Transverse colon (tissue), 4 donors: ENCODE measurements at regions of chr17 and their contacts with region 1.

Region 1: DNA sequence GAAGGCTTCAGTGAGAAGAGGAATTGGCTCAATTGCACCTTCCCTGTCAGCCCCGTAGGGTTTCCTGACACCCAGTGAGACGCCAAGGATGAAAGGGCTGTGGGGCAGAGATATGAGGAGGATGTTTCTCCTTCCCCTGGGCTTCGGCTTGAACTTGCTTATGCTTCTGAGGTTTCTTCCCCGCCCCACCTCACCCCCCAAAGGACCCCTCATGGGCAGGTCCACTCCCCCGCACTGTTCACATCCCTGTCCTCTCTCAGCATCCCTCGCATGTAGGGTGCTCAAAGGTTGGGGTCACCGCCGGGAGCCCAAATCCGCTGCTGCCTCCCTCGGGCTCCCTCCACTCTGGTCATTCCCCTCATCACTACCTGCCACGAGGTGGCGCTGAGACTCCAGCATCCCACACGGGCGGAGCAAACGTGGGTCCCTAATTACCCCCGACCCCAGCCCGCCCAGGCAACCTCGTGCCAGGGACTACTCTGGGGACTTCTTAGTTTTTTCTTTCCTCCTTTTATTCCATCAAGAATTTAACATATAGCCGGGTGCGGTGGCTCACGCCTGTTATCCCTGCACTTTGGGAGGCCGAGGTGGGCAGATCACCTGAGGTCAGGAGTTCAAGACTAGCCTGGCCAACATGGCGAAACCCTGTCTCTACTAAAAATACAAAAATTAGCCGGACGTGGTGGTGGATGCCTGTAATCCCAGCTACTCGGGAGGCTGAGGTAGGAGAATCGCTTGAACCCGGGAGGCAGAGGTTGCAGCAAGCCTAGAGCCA is 3.3 kb upstream of the TRARG1 start:
- DNase-seq: peak; percentile 71
- H3K4me3 ChIP-seq: no peak overlapping the region
- H3K27ac ChIP-seq: no peak overlapping the region
- H3K4me1 ChIP-seq: no peaks in the 10 kb centered on the region
- H3K27me3 ChIP-seq: peaks cover 63% of the 10 kb centered on the region
- CTCF ChIP-seq: peak; percentile 63 to 91 (median 82)
- EP300 ChIP-seq: no peak
- POLR2A ChIP-seq: no peak

Region 2: DNA sequence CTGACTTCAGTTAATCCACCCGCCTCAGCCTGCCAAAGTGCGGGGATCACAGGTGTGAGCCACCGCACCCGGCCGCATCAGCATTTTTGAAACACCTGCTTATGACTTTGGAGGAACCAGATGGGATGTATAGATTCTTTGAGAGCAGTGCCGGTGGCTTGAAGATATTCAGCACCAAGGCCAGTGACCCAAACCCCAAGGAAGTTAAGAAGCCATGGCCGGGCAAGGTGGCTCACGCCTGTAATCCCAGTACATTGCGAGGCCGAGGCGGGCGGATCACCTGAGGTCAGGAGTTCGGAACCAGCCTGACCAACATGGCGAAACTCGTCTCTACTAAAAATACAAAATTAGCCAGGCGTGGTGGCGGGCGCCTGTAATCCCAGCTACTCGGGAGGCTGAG is 47.2 kb after region 1 on chr17:
- in situ Hi-C with region 1: loop called in 1 of 4 experiments (anchors 10 kb)
- intact Hi-C with region 1: loop called (anchors 5 kb)
- DNase-seq: no peak
- H3K4me3 ChIP-seq: no peak overlapping the region
- H3K27ac ChIP-seq: no peak overlapping the region
- H3K4me1 ChIP-seq: no peaks in the 10 kb centered on the region
- H3K27me3 ChIP-seq: peaks cover 12% of the 10 kb centered on the region
- CTCF ChIP-seq: no peak
- EP300 ChIP-seq: no peak
- POLR2A ChIP-seq: no peak

Region 3: DNA sequence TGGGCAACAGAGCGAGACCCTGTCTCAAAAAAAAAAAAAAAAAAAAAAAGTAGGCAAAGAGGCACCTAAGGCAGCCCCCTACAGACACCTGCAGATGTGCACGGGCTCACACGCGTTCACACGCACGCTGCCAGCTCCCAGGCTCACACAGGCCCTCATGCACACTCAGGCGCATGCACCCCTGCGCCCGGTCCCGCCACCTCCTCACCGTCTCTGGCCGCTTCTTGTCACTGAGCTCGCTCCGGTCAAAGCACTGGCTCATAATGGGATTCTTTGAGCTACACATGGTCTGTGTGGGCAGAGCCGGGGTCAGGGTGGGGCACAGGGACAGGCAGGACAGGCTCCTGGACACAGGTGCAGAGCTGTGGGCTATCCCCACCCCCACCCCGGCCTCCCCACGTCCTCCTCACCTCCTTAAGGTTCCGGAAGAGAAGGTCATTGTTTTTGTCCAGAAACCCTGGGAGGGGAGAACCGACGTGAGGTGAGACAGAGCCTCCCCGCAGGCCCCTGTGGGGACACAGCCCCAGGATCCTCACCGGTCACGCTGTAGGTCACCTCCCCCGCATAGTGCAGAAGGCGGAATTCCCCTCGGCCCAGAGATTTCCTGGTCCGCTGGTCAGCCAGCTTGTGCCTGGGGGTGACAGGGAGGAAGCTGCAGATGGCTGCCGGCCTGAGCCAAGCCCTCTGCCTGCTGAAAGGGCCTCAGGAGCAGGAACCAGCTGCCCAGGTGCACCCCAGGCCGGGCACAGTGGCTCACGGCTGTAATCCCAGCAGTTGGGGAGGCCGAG is 198.4 kb after region 1 on chr17:
- in situ Hi-C with region 1: no loop called
- intact Hi-C with region 1: no loop called
- DNase-seq: no peak
- H3K4me3 ChIP-seq: no peak overlapping the region
- H3K27ac ChIP-seq: no peak overlapping the region
- H3K4me1 ChIP-seq: no peaks in the 10 kb centered on the region
- H3K27me3 ChIP-seq: no peaks in the 10 kb centered on the region
- CTCF ChIP-seq: no peak
- EP300 ChIP-seq: no peak
- POLR2A ChIP-seq: no peak

Region 4: DNA sequence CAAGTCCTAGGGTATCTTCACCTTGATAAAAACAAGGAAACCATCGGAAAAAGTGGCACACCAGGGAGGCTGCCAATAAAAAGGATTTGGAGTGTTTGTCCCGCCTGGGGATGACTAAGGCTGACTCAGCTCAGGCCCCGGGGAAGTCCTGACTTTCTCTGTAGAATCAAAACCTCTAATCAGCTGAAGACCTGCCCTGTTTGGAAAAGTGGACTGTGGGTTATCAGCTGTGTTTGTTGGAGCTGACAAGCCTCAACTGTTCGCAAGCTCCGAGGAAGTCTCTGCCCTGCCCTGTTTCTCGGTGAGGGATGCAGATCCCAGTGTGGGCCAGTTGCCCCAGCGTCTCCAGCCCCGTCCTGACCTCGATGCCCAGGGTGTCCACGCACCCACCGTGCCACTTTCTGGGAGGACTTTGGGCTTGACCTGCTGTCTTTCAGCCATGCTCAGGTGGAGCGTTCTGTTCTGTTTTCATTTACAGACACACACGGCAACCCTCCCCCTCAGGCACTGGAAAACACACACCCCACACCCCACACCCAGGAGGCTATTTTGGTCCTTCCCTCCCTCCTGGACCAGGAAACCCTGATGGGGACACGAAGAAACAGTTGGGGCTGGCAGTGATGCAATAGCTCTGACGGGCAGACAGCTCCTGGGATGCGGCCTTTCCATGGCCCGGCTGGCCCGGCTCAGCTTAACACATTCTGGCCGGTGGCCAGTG is 314.0 kb after region 1 on chr17:
- in situ Hi-C with region 1: no loop called
- intact Hi-C with region 1: no loop called
- DNase-seq: peak; percentile 71
- H3K4me3 ChIP-seq: no peak overlapping the region
- H3K27ac ChIP-seq: peak overlapping the region; percentile 62 to 76 (median 74)
- H3K4me1 ChIP-seq: peaks cover 25 to 47% (median 45%) of the 10 kb centered on the region in 4 donors
- H3K27me3 ChIP-seq: no peaks in the 10 kb centered on the region
- CTCF ChIP-seq: no peak
- EP300 ChIP-seq: no peak
- POLR2A ChIP-seq: no peak